B cell (primary cell): ENCODE measurements at regions of chr9 and their contacts with region 1.

Region 1: DNA sequence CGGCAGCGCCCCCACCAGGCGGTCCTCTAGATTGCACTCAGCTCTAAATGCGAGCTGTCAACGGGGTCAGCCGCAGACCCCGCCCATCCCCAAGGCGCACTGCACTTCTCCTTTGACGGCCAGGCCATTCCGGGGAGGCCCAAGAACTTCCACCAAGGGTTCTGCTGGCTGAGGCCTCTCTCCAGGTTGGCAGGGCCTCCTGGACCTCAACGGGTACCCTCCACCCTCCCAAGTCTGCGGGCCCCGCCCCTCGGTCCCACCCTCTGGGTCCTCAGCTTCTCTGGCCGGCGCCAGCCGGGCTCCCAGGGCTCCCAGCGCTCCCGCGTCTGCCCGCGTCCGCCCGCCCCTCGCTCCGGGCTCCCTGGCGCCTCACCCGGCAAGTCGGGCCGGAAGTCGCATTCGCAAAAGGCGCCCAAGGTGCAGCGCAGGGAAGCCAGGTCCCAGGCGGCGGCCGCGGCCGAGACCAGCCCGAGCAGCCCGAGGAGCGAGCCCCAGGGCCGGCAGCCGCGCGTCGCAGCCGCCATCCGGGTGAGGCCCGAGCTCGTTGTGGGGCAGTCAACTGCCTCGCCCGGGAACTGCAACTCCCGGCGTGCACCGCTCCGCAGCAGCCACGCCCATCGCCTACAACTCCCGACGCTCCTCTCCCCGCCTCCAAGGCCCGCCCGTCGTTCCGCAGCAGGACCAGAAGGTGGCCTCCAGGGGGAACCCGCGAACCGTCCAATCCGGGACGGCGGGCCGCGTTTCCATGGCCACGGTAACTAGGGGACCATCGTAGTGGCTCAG is at the start of gene TOR2A:
- DNase-seq: peak; percentile 99
- ATAC-seq: peak; percentile 92
- H3K4me3 ChIP-seq: peak within 1 kb of the TSS in 4 of 5 experiments; percentile 45 to 76 (median 64)
- H3K4me3 Mint-ChIP-seq: peak within 1 kb of the TSS; percentile 85
- H3K27ac ChIP-seq: peak within 1 kb of the TSS; percentile 80 to 96
- H3K27ac Mint-ChIP-seq: peak within 1 kb of the TSS; percentile 88
- H3K4me1 ChIP-seq: peaks cover 11 to 16% of the 10 kb centered on the region in 2 donors
- H3K4me1 Mint-ChIP-seq: peaks cover 16% of the 10 kb centered on the region
- H3K27me3 ChIP-seq: no peaks in the 10 kb centered on the region
- H3K27me3 Mint-ChIP-seq: no peaks in the 10 kb centered on the region
- CTCF ChIP-seq: peak; percentile 49
- total RNA-seq, gene TOR2A: 14.3 and 15.8 TPM in 2 replicates

Region 2: GRCh38 chr9:127568971-127569885 is 165.7 kb before region 1 on chr9:
- CTCF ChIA-PET with region 1: no interaction called
- POLR2A ChIA-PET with region 1: no interaction called
- intact Hi-C with region 1: loop called (anchors 1 kb)
- DNase-seq: peak; percentile 80
- ATAC-seq: peak; percentile 92
- H3K4me3 ChIP-seq: peak overlapping the region in 4 of 5 experiments; percentile 53 to 72 (median 65)
- H3K4me3 Mint-ChIP-seq: peak overlapping the region; percentile 93
- H3K27ac ChIP-seq: no peak overlapping the region
- H3K27ac Mint-ChIP-seq: peak overlapping the region; percentile 81
- H3K4me1 ChIP-seq: peaks cover 18 to 24% of the 10 kb centered on the region in 2 donors
- H3K4me1 Mint-ChIP-seq: peaks cover 14% of the 10 kb centered on the region
- H3K27me3 ChIP-seq: peaks cover 0 to 7% (median 0%) of the 10 kb centered on the region in 4 experiments
- H3K27me3 Mint-ChIP-seq: no peaks in the 10 kb centered on the region
- CTCF ChIP-seq: no peak

Region 3: DNA sequence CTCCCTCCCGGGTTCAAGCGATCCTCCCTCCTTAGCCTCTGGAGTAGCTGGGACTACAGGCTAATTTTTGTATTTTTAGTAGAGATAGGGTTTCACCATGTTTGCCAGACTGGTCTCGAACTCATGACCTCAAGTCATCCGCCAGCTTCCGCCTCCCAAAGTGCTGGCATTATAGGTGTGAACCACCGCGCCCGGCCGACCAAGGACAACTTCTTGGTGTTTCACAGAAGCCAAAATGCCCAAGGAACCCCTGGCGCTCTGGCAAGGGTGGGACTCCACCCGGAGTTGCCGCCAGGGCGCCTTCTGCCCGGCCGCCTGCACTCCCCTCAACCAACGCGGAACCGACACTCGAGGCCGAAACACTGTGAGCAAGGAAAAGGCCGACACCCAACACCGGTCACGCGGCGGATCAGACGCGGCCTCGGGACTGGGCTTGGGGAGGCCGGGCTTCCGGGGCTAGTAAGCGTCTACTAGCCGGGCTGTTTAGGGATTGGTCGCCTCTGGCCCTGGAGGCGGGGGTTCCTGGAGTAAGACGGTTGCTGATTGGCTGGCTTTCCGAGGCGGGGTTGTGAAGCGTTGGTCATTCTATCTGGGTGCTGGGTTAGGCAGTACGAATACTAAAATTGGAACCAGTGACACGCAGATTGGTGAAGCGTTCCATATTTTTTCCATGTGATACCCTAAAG is 35.8 kb before region 1 on chr9:
- CTCF ChIA-PET with region 1: no interaction called
- POLR2A ChIA-PET with region 1: no interaction called
- intact Hi-C with region 1: loop called (anchors 1 kb)
- DNase-seq: peak; percentile 92
- ATAC-seq: peak; percentile 100
- H3K4me3 ChIP-seq: peak overlapping the region; percentile 34 to 59 (median 46)
- H3K4me3 Mint-ChIP-seq: peak overlapping the region; percentile 82
- H3K27ac ChIP-seq: peak overlapping the region in 1 of 2 donors; percentile 67
- H3K27ac Mint-ChIP-seq: peak overlapping the region; percentile 65
- H3K4me1 ChIP-seq: peaks cover 6 to 12% of the 10 kb centered on the region in 2 donors
- H3K4me1 Mint-ChIP-seq: peaks cover 14% of the 10 kb centered on the region
- H3K27me3 ChIP-seq: no peaks in the 10 kb centered on the region
- H3K27me3 Mint-ChIP-seq: no peaks in the 10 kb centered on the region
- CTCF ChIP-seq: peak; percentile 19

Region 4: GRCh38 chr9:127770905-127771569 is 36.1 kb after region 1 on chr9:
- CTCF ChIA-PET with region 1: interaction called, 24 read pairs
- POLR2A ChIA-PET with region 1: interaction called, 9 read pairs
- intact Hi-C with region 1: loop called (anchors 1 kb)
- DNase-seq: peak; percentile 95
- ATAC-seq: peak; percentile 86
- H3K4me3 ChIP-seq: peak overlapping the region; percentile 43 to 73 (median 64)
- H3K4me3 Mint-ChIP-seq: peak overlapping the region; percentile 94
- H3K27ac ChIP-seq: peak overlapping the region; percentile 77 to 94
- H3K27ac Mint-ChIP-seq: peak overlapping the region; percentile 95
- H3K4me1 ChIP-seq: peaks cover 55 to 90% of the 10 kb centered on the region in 2 donors
- H3K4me1 Mint-ChIP-seq: peaks cover 68% of the 10 kb centered on the region
- H3K27me3 ChIP-seq: no peaks in the 10 kb centered on the region
- H3K27me3 Mint-ChIP-seq: no peaks in the 10 kb centered on the region
- CTCF ChIP-seq: no peak

Region 5: DNA sequence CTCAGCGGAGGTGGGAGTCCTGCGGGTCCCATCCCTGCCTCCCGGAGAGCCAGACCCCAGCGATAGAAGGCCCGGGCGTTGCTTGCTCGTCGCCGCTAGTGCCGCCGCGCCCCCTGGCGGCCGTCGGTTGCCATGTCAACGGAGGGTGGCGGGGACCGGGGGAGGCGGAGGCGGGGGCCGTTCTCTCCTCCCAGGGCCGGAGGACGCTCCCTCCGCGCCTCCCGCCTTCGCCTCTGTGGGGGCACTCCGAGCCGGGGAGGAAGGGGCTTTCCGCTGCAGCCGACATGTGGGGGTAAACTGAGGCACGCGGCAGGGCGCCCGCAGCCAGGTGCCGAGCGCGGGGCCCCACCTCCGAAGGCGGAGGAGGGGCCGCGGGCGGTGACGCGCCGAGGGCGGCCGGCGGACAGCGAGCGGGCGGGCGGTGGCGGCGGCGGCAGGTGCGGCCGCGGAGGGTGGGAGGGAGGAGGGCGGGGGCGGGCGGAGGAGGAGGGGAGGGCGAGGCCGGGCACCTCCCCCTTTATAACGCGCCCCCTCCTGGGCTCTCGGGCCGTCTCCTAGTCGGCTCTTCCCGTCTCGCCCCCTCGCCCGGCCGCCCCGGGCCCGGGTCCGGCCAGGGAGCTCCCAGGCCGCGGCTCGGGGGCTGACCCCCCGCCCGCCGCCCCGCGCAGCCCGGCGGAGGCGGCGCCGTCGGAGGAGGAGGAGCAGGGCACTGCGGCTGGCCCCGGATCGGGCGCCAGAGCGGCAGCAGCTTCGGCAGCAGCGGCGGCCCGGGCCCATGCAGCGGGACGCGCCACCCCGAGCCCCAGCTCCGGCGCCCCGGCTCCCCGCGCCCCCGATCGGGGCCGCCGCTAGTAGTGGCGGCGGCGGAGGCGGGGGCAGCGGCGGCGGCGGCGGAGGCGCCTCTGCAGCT is 50.3 kb after region 1 on chr9:
- CTCF ChIA-PET with region 1: interaction called, 38 read pairs
- POLR2A ChIA-PET with region 1: interaction called, 39 read pairs
- intact Hi-C with region 1: loop called (anchors 1 kb)
- DNase-seq: peak; percentile 95
- ATAC-seq: peak; percentile 62
- H3K4me3 ChIP-seq: peak overlapping the region in 4 of 5 experiments; percentile 48 to 99 (median 92)
- H3K4me3 Mint-ChIP-seq: peak overlapping the region; percentile 90
- H3K27ac ChIP-seq: peak overlapping the region; percentile 91 to 95
- H3K27ac Mint-ChIP-seq: peak overlapping the region; percentile 98
- H3K4me1 ChIP-seq: peaks cover 44 to 60% of the 10 kb centered on the region in 2 donors
- H3K4me1 Mint-ChIP-seq: peaks cover 56% of the 10 kb centered on the region
- H3K27me3 ChIP-seq: no peaks in the 10 kb centered on the region
- H3K27me3 Mint-ChIP-seq: no peaks in the 10 kb centered on the region
- CTCF ChIP-seq: peak; percentile 80

Region 6: GRCh38 chr9:127862075-127863011 is 127.4 kb after region 1 on chr9:
- CTCF ChIA-PET with region 1: interaction called, 109 read pairs
- POLR2A ChIA-PET with region 1: interaction called, 5 read pairs
- intact Hi-C with region 1: no loop called
- DNase-seq: peak; percentile 87
- ATAC-seq: peak; percentile 77
- H3K4me3 ChIP-seq: no peak overlapping the region
- H3K4me3 Mint-ChIP-seq: peak overlapping the region; percentile 78
- H3K27ac ChIP-seq: peak overlapping the region; percentile 90 to 92
- H3K27ac Mint-ChIP-seq: peak overlapping the region; percentile 99
- H3K4me1 ChIP-seq: peaks cover 59 to 78% of the 10 kb centered on the region in 2 donors
- H3K4me1 Mint-ChIP-seq: peaks cover 64% of the 10 kb centered on the region
- H3K27me3 ChIP-seq: no peaks in the 10 kb centered on the region
- H3K27me3 Mint-ChIP-seq: no peaks in the 10 kb centered on the region
- CTCF ChIP-seq: no peak

Region 7: DNA sequence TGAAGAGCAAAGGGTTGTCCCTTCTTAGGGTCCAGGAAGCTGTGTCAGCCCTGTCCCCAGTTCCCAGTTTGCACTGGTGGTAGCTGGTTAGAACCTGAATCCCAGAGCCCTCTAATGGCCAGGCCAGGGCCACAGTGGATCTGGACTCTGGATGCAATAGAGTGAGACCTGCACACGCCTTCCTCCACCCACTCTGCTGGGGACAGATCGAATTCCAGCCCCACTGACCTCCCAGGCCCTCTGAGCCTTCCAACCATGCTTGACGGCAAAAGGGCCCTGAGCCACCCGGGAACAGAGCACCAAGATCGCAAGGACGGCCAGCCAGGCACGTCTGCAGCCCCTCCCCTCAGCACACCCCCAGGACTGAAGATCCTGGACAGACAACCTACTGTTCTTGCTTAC is 308.5 kb after region 1 on chr9:
- CTCF ChIA-PET with region 1: no interaction called
- POLR2A ChIA-PET with region 1: no interaction called
- intact Hi-C with region 1: no loop called
- DNase-seq: no peak
- ATAC-seq: no peak
- H3K4me3 ChIP-seq: no peak overlapping the region
- H3K4me3 Mint-ChIP-seq: no peak overlapping the region
- H3K27ac ChIP-seq: no peak overlapping the region
- H3K27ac Mint-ChIP-seq: no peak overlapping the region
- H3K4me1 ChIP-seq: no peaks in the 10 kb centered on the region
- H3K4me1 Mint-ChIP-seq: no peaks in the 10 kb centered on the region
- H3K27me3 ChIP-seq: no peaks in the 10 kb centered on the region
- H3K27me3 Mint-ChIP-seq: peaks cover 3% of the 10 kb centered on the region
- CTCF ChIP-seq: no peak